ENCODE measurements at regions of chr12 and their contacts with region 1.

Region 1: DNA sequence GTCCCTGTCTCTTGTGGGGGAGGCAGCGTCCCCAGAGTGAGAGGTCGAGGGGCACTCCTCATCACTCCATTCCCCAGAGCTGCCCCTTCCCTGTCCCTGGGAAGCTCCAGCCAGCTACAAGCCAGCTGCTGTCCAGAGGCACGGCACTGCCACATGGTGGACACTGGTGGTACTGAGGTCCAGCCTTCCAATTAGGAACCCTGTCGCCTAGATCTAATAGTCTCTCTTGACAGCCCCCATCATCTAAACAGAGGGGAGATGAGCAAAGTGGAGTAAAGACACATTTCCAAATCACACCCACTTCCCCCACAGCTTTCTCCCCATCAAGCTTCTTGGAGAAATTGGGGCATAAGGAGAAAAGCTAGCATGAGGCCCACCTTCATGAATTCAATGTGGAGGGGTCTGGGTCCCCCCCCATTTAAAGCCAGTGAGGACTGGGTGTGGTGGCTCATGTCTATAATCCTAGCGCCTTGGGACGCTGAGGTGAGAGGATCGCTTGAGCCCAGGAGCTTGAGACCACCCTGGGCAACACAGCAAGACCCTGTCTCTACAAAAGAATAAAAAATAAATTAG is 2.1 kb upstream of the INHBE start:
- DNase-seq: no peak
- ATAC-seq: peak; percentile 68
- H3K4me3 ChIP-seq: no peak overlapping the region
- H3K27ac ChIP-seq: no peak overlapping the region
- H3K4me1 ChIP-seq: peaks cover 6% of the 10 kb centered on the region
- H3K27me3 ChIP-seq: no peaks in the 10 kb centered on the region
- CTCF ChIP-seq: peak; percentile 94 to 97 (median 96); a peak in 5 of 6 replicates
- EP300 ChIP-seq: no peak
- POLR2A ChIP-seq: no peak
- RAD21 ChIP-seq: peak; percentile 96

Region 2: GRCh38 chr12:57213058-57213715 is 239.8 kb before region 1 on chr12:
- CTCF ChIA-PET with region 1: interaction called, 41 read pairs
- POLR2A ChIA-PET with region 1: no interaction called
- RAD21 ChIA-PET with region 1: interaction called, 14 read pairs
- SMC1A ChIA-PET with region 1: interaction called, 15 read pairs
- in situ Hi-C with region 1: no loop called
- intact Hi-C with region 1: no loop called
- DNase-seq: peak; percentile 27
- ATAC-seq: peak; percentile 79
- H3K4me3 ChIP-seq: no peak overlapping the region
- H3K27ac ChIP-seq: no peak overlapping the region
- H3K4me1 ChIP-seq: peaks cover 13% of the 10 kb centered on the region
- H3K27me3 ChIP-seq: peaks cover 16 to 20% of the 10 kb centered on the region in 2 experiments
- CTCF ChIP-seq: peak; percentile 94 to 97 (median 97)
- EP300 ChIP-seq: no peak
- POLR2A ChIP-seq: no peak
- RAD21 ChIP-seq: peak; percentile 84

Region 3: GRCh38 chr12:57248934-57249742 is 203.9 kb before region 1 on chr12:
- CTCF ChIA-PET with region 1: interaction called, 90 read pairs
- POLR2A ChIA-PET with region 1: interaction called, 6 read pairs
- RAD21 ChIA-PET with region 1: interaction called, 85 read pairs
- SMC1A ChIA-PET with region 1: interaction called, 4 read pairs
- in situ Hi-C with region 1: no loop called
- intact Hi-C with region 1: no loop called
- DNase-seq: no peak
- ATAC-seq: peak; percentile 95
- H3K4me3 ChIP-seq: peak overlapping the region; percentile 41; the same call in 1 of the 2 replicates
- H3K27ac ChIP-seq: no peak overlapping the region
- H3K4me1 ChIP-seq: peaks cover 1% of the 10 kb centered on the region; the same call in 1 of the 2 replicates
- H3K27me3 ChIP-seq: no peaks in the 10 kb centered on the region
- CTCF ChIP-seq: no peak
- EP300 ChIP-seq: no peak
- POLR2A ChIP-seq: no peak
- RAD21 ChIP-seq: no peak

Region 4: DNA sequence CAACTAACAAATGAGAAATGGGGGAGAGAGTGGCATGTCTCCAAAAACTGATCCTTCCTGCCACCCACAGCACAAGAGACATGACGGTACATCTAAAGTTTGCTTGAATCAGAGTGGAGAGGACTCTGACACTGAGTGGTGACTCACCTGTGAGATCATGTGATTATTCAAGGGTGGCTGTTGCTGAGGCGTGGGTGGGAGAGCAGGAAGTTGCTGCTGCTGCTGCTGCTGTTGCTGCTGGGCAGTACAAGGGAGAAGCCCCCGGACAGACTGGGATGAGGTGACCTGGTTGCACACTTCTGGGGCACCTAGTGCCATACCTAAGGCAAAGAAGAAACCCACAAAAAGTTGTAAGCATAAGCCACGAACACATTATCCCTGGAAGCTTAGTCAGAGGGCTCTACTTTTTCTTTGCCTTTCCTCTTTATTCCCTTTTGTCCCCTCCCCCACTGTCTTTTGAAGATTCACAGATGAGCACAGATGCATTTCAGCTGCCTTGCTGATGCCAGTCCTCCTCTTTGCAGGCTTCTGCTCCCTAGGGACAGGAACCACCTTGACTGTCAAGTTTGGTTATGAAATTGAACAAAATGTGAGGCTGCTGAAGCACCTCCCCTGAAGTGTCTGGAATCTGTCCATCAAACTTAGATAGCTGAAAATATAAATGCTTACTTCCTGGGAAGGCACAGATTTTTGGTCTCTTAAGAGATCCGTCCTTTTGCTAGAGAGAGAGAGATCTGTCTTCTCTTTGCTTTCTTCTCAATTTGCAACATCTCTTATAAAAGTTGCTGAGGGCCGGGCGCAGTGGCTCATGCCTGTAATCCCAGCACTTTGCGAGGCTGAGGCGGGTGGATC is 172.6 kb before region 1 on chr12:
- CTCF ChIA-PET with region 1: interaction called, 32 read pairs
- POLR2A ChIA-PET with region 1: interaction called, 13 read pairs
- RAD21 ChIA-PET with region 1: interaction called, 12 read pairs
- SMC1A ChIA-PET with region 1: interaction called, 34 read pairs
- in situ Hi-C with region 1: no loop called
- intact Hi-C with region 1: no loop called
- DNase-seq: peak; percentile 74
- ATAC-seq: peak; percentile 99
- H3K4me3 ChIP-seq: no peak overlapping the region
- H3K27ac ChIP-seq: peak overlapping the region; percentile 61
- H3K4me1 ChIP-seq: peaks cover 12% of the 10 kb centered on the region
- H3K27me3 ChIP-seq: no peaks in the 10 kb centered on the region
- CTCF ChIP-seq: no peak
- EP300 ChIP-seq: 0 out of 4 replicates have a peak, but pooled peaks of 1 of the 2 experiments have one; percentile 6
- POLR2A ChIP-seq: peak; percentile 79
- RAD21 ChIP-seq: no peak

Region 5: GRCh38 chr12:57332646-57333312 is 120.2 kb before region 1 on chr12:
- CTCF ChIA-PET with region 1: interaction called, 10 read pairs
- POLR2A ChIA-PET with region 1: interaction called, 9 read pairs
- RAD21 ChIA-PET with region 1: interaction called, 5 read pairs
- SMC1A ChIA-PET with region 1: interaction called, 4 read pairs
- in situ Hi-C with region 1: no loop called
- intact Hi-C with region 1: no loop called
- DNase-seq: no peak
- ATAC-seq: no peak
- H3K4me3 ChIP-seq: no peak overlapping the region
- H3K27ac ChIP-seq: no peak overlapping the region
- H3K4me1 ChIP-seq: no peaks in the 10 kb centered on the region
- H3K27me3 ChIP-seq: no peaks in the 10 kb centered on the region
- CTCF ChIP-seq: no peak
- EP300 ChIP-seq: no peak
- POLR2A ChIP-seq: no peak
- RAD21 ChIP-seq: no peak

Region 6: GRCh38 chr12:57430931-57431720 is 21.9 kb before region 1 on chr12 and contains the start of gene R3HDM2:
- CTCF ChIA-PET with region 1: interaction called, 82 read pairs
- POLR2A ChIA-PET with region 1: interaction called, 29 read pairs
- RAD21 ChIA-PET with region 1: interaction called, 55 read pairs
- SMC1A ChIA-PET with region 1: interaction called, 30 read pairs
- in situ Hi-C with region 1: no loop called
- intact Hi-C with region 1: no loop called
- DNase-seq: peak; percentile 77
- ATAC-seq: peak; percentile 96
- H3K4me3 ChIP-seq: peak within 1 kb of the TSS; percentile 88
- H3K27ac ChIP-seq: peak within 1 kb of the TSS; percentile 90
- H3K4me1 ChIP-seq: peaks cover 5% of the 10 kb centered on the region; the same call in 1 of the 2 replicates
- H3K27me3 ChIP-seq: no peaks in the 10 kb centered on the region
- CTCF ChIP-seq: no peak
- EP300 ChIP-seq: no peak
- POLR2A ChIP-seq: peak; percentile 96
- RAD21 ChIP-seq: no peak
- polyA plus RNA-seq, gene R3HDM2: 4.6 to 6.2 TPM

Measured in GM12878 (cell line).